ENCODE measurements at regions of chr16 and their contacts with region 1.

Region 1: DNA sequence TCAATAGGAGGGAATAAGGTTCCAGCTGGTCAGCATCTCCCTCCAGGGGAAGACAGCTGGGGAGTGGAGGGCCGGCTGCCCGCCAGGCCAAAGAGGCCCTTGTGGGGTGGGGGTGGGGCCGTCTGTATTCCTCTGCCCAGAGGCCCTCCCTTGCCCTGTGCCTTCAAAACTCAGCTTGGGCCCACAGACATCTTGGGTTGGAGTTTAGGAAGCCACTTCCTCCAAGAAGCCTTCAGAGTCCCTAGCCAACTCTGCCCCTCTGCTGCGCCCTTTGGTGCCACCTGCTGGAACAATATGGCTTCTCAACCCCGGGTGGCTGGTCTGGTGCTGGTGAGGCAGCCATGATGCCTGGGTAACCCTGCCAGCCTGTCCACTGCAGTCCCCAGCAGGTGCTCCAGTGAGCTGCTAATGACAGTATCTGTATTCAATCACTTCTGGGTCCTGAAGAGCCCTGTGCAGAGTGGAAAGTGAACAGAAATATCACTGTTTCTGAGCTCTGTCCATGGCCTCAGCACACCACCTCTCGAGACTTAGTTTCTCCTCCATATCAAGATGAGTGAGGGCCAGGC is 16.7 kb downstream of the HSD11B2 start:
- DNase-seq: peak; percentile 75
- H3K4me3 Mint-ChIP-seq: no peak overlapping the region
- H3K27ac Mint-ChIP-seq: no peak overlapping the region
- H3K4me1 Mint-ChIP-seq: no peaks in the 10 kb centered on the region
- H3K27me3 Mint-ChIP-seq: no peaks in the 10 kb centered on the region
- CTCF ChIP-seq: peak; percentile 53

Region 2: GRCh38 chr16:67461600-67462592 is 14.3 kb after region 1 on chr16:
- CTCF ChIA-PET with region 1: interaction called, 18 read pairs
- POLR2A ChIA-PET with region 1: no interaction called
- intact Hi-C with region 1: no loop called
- DNase-seq: no peak
- H3K4me3 Mint-ChIP-seq: no peak overlapping the region
- H3K27ac Mint-ChIP-seq: peak overlapping the region; percentile 39
- H3K4me1 Mint-ChIP-seq: peaks cover 28% of the 10 kb centered on the region
- H3K27me3 Mint-ChIP-seq: no peaks in the 10 kb centered on the region
- CTCF ChIP-seq: no peak

Region 3: GRCh38 chr16:67470359-67470758 is 22.8 kb after region 1 on chr16:
- CTCF ChIA-PET with region 1: interaction called, 18 read pairs
- POLR2A ChIA-PET with region 1: interaction called, 3 read pairs
- intact Hi-C with region 1: no loop called
- DNase-seq: no peak
- H3K4me3 Mint-ChIP-seq: no peak overlapping the region
- H3K27ac Mint-ChIP-seq: no peak overlapping the region
- H3K4me1 Mint-ChIP-seq: peaks cover 22% of the 10 kb centered on the region
- H3K27me3 Mint-ChIP-seq: no peaks in the 10 kb centered on the region
- CTCF ChIP-seq: no peak

Region 4: DNA sequence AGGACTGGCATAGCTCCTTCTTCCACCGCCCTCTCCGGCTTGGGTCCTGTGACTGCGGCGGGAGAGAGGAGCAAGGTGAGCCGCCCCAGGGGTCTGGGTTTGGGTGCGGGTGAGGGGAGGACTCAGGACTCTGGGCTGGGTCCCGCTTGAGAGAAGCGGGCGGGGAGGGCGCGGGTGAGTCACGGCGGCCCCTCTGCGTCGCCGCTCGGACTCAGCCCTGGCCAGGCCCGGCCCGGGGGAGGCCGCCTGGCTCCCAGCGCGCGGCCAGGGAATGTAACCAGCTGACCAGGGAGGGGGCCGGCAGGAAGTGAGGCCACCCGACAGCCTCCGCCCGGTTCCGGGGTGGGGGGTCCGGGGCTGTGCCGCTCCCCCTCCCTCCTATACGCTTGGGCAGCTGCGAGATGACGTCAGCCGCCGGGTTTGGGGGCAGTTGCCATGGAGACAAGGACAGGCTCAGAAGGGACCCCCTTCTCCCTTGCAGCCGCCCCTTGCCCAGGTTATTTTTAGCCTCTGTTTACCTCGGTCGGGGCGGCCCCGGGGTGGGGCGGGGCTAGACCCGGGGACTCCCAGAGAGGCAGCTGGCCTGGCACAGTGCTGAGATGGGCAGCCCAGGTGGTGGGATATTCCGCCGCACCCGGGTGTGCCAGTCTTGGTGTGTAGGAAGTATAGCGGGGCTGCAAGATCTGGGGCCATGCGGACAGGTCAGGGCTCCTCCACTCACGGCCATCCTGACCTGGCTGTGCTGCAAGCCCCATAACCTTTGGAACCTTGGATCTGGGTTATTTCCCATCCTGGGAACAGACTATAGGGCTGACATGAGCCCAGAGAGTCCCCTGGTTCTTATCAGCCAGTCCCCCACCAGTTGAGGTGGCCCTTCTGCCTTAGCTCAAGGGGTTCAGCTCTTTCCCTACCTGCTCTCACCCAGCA is 82.7 kb after region 1 on chr16:
- CTCF ChIA-PET with region 1: no interaction called
- POLR2A ChIA-PET with region 1: no interaction called
- intact Hi-C with region 1: no loop called
- DNase-seq: peak; percentile 34
- H3K4me3 Mint-ChIP-seq: peak overlapping the region; percentile 82
- H3K27ac Mint-ChIP-seq: peak overlapping the region; percentile 88
- H3K4me1 Mint-ChIP-seq: peaks cover 33% of the 10 kb centered on the region
- H3K27me3 Mint-ChIP-seq: no peaks in the 10 kb centered on the region
- CTCF ChIP-seq: no peak

Measured in MCF 10A (cell line).